Naive thymus-derived CD4-positive, alpha-beta T cell (primary cell): ENCODE measurements at regions of chr4 and their contacts with region 1.

Region 1: DNA sequence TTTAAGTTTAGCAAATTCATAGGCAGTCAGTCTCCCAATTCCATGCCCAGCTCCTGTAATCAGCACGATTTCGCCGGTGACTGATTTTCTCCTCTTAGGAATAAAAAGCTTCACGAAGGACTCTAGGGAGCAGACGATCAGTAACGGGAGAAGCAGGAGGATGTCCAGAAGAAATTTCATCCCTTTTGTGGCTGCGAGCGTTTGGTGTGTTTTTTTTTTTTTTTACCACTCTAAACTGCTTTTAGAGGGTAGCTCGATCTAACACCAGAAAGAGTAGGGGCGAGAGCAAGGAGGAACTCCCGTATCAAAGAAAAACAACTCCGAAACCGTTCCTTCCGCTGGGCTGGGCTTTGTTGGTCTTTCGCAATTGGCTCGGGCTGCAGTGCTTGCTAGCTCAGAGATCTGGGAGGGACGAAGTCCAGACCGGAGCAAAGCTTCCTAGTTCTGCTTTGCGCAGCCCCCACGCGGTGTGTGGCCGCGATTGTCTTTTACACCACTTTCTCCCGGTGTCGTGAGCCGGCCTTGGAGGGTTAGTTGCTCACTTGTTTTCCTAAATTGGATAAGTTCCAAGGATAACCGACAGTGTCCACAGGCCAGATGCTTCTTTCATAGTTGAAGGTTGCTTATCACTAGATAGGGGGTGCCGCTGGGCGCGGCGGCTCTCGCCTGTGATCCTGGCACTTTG is at the start of gene HSD17B11:
- DNase-seq: peak; percentile 44 to 83 (median 79)
- ATAC-seq: peak; percentile 99
- H3K4me3 ChIP-seq: peak within 1 kb of the TSS; percentile 85
- H3K4me3 Mint-ChIP-seq: peak within 1 kb of the TSS; percentile 87 to 99 (median 97)
- H3K27ac ChIP-seq: peak within 1 kb of the TSS; percentile 82
- H3K27ac Mint-ChIP-seq: peak within 1 kb of the TSS; percentile 83 to 96 (median 94)
- H3K4me1 ChIP-seq: peaks cover 10 to 17% of the 10 kb centered on the region in 2 donors
- H3K4me1 Mint-ChIP-seq: peaks cover 32 to 66% (median 57%) of the 10 kb centered on the region in 7 donors
- H3K27me3 ChIP-seq: no peaks in the 10 kb centered on the region
- H3K27me3 Mint-ChIP-seq: peaks cover 0 to 14% (median 0%) of the 10 kb centered on the region in 5 donors
- total RNA-seq, gene HSD17B11: 34.3 to 74.4 (median 61.0) TPM

Region 2: GRCh38 chr4:87375719-87376291 is 15.2 kb before region 1 on chr4:
- CTCF ChIA-PET with region 1: interaction called, 34 read pairs
- POLR2A ChIA-PET with region 1: interaction called, 9 read pairs
- intact Hi-C with region 1: loop called in 1 of 2 experiments (anchors 1 kb)
- DNase-seq: peak in 4 of 9 donors; percentile 18 to 36 (median 24)
- ATAC-seq: peak; percentile 62
- H3K4me3 ChIP-seq: no peak overlapping the region
- H3K4me3 Mint-ChIP-seq: no peak overlapping the region
- H3K27ac ChIP-seq: no peak overlapping the region
- H3K27ac Mint-ChIP-seq: no peak overlapping the region
- H3K4me1 ChIP-seq: no peaks in the 10 kb centered on the region
- H3K4me1 Mint-ChIP-seq: peaks cover 0 to 9% (median 0%) of the 10 kb centered on the region in 7 donors
- H3K27me3 ChIP-seq: no peaks in the 10 kb centered on the region
- H3K27me3 Mint-ChIP-seq: no peaks in the 10 kb centered on the region

Region 3: DNA sequence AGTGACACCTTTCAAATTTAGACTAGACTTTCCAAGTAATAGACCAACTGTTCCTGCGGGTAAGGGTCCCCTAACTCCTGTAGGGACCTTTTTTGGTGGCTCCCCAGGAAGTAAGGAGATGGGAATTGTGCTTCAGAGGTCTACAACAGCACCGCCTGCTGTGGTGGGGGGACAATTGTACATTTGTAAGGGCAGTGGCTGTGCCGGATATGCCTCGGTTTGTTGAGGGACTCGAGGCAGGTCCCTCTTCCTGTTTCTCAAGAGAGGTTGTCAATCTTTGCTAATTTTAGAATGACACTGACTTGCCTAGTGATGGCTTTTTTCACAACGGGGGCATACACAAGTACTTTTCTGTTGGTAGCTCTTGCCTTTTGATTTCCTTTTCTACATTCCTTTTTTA is 15.4 kb after region 1 on chr4:
- CTCF ChIA-PET with region 1: no interaction called
- POLR2A ChIA-PET with region 1: interaction called, 5 read pairs
- intact Hi-C with region 1: loop called in 1 of 2 experiments (anchors 2 kb)
- DNase-seq: peak in 1 of 9 donors; percentile 18
- ATAC-seq: peak; percentile 31
- H3K4me3 ChIP-seq: no peak overlapping the region
- H3K4me3 Mint-ChIP-seq: peak overlapping the region; percentile 19 to 76 (median 58)
- H3K27ac ChIP-seq: no peak overlapping the region
- H3K27ac Mint-ChIP-seq: peak overlapping the region in 6 of 9 donors; percentile 2 to 82 (median 60)
- H3K4me1 ChIP-seq: no peaks in the 10 kb centered on the region
- H3K4me1 Mint-ChIP-seq: peaks cover 6 to 23% (median 17%) of the 10 kb centered on the region in 7 donors
- H3K27me3 ChIP-seq: no peaks in the 10 kb centered on the region
- H3K27me3 Mint-ChIP-seq: peaks cover 15 to 25% (median 22%) of the 10 kb centered on the region in 5 donors